Mammary epithelial cell (primary cell): ENCODE measurements at regions of chr1 and their contacts with region 1.

Region 1: GRCh38 chr1:227437495-227438008 is 119.3 kb upstream of the CDC42BPA start:
- DNase-seq: peak; percentile 37
- H3K4me3 ChIP-seq: peak overlapping the region; percentile 25 to 41 (median 36)
- H3K27ac ChIP-seq: no peak overlapping the region
- H3K4me1 ChIP-seq: no peaks in the 10 kb centered on the region
- H3K27me3 ChIP-seq: no peaks in the 10 kb centered on the region
- CTCF ChIP-seq: peak; percentile 39 to 52

Region 2: DNA sequence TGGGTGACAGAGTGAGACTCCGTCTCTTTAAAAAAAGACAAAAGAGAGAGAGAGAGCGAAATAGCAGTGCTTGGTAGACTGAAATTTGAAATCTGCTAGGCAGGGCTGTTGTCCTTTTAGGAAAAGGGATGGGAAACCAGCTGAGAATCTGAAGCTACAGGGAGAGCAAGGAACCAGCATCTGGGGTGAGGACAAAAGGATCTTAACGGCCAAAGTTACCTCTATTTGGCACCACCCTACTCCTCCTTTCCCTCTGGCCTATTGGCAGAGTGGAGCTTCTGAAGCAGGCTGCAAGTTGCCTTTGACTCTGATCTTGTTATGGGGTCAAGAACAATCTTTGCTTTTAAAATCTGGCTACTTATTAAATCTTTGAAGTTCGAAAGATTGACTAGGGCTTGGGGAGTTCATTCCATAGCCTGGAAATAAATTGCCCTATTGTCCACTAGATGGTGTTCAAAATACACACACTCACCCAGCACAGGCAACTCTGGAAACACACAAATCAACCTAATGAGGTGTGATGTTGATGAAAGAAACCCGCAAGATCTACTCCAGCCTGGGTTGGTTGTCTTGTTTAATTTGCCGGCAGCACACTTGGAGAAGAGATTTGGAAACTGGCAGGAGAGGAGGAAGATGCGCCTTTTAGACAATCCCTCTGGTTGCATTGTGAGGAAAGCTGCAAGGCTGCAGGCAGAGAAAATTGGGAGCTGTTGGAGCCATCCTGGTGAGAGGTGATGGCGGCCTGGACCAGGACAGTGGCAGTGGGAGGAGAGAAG is 1013.1 kb before region 1 on chr1:
- CTCF ChIA-PET with region 1: no interaction called
- dilution Hi-C with region 1: no loop called
- in situ Hi-C with region 1: no loop called
- intact Hi-C with region 1: loop called (anchors 5 kb)
- DNase-seq: peak; percentile 39
- H3K4me3 ChIP-seq: no peak overlapping the region
- H3K27ac ChIP-seq: no peak overlapping the region
- H3K4me1 ChIP-seq: no peaks in the 10 kb centered on the region
- H3K27me3 ChIP-seq: no peaks in the 10 kb centered on the region
- CTCF ChIP-seq: peak; percentile 42 to 67

Region 3: GRCh38 chr1:226634166-226634588 is 803.4 kb before region 1 on chr1:
- CTCF ChIA-PET with region 1: no interaction called
- dilution Hi-C with region 1: no loop called
- in situ Hi-C with region 1: no loop called
- intact Hi-C with region 1: loop called (anchors 1 kb)
- DNase-seq: peak; percentile 32
- H3K4me3 ChIP-seq: no peak overlapping the region
- H3K27ac ChIP-seq: no peak overlapping the region
- H3K4me1 ChIP-seq: peaks cover 7% of the 10 kb centered on the region
- H3K27me3 ChIP-seq: no peaks in the 10 kb centered on the region
- CTCF ChIP-seq: peak; percentile 73 to 96

Region 4: DNA sequence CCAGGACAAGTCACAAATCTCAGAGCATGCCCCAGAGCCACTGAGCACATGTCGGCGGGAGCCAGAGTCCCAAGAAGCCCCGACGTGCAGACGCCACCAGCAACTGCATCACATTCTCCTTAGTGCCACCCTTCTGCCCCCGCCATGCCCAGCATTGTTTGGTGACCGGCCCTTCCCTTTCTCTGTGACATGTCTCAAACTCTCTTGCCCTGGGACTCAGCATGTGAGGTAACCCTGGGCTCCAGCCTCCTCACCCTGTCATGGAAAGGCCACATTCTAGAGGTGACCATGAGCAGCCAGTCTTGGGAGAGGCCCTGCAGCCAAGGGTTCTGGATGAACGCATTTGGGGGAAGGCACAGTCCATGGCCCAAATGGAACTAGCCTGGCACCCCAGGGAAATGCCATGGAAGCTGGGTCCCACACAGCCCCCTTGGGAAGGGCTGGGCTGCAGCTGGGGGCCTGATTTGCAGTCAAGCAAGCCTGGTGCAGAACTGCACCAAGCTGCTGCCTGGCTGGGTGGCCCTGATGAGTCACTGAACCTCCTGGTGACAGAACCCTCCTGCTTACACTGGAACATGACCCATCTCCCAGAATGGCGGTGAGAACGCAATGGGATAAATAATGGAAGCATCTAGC is 792.9 kb before region 1 on chr1:
- CTCF ChIA-PET with region 1: no interaction called
- dilution Hi-C with region 1: no loop called
- in situ Hi-C with region 1: no loop called
- intact Hi-C with region 1: no loop called
- DNase-seq: no peak
- H3K4me3 ChIP-seq: no peak overlapping the region
- H3K27ac ChIP-seq: no peak overlapping the region
- H3K4me1 ChIP-seq: peaks cover 17% of the 10 kb centered on the region
- H3K27me3 ChIP-seq: no peaks in the 10 kb centered on the region
- CTCF ChIP-seq: no peak

Region 5: GRCh38 chr1:226827968-226828513 is 609.5 kb before region 1 on chr1:
- CTCF ChIA-PET with region 1: no interaction called
- dilution Hi-C with region 1: no loop called
- in situ Hi-C with region 1: no loop called
- intact Hi-C with region 1: loop called (anchors 1 kb)
- DNase-seq: peak; percentile 73
- H3K4me3 ChIP-seq: no peak overlapping the region
- H3K27ac ChIP-seq: peak overlapping the region; percentile 29
- H3K4me1 ChIP-seq: peaks cover 8% of the 10 kb centered on the region
- H3K27me3 ChIP-seq: no peaks in the 10 kb centered on the region
- CTCF ChIP-seq: peak; percentile 87 to 99

Region 6: GRCh38 chr1:227058321-227058751 is 379.2 kb before region 1 on chr1:
- CTCF ChIA-PET with region 1: no interaction called
- dilution Hi-C with region 1: no loop called
- in situ Hi-C with region 1: no loop called
- intact Hi-C with region 1: loop called (anchors 2 kb)
- DNase-seq: peak; percentile 83
- H3K4me3 ChIP-seq: peak overlapping the region in 1 of 3 experiments; percentile 0
- H3K27ac ChIP-seq: peak overlapping the region; percentile 90
- H3K4me1 ChIP-seq: peaks cover 14% of the 10 kb centered on the region
- H3K27me3 ChIP-seq: no peaks in the 10 kb centered on the region
- CTCF ChIP-seq: no peak

Region 7: DNA sequence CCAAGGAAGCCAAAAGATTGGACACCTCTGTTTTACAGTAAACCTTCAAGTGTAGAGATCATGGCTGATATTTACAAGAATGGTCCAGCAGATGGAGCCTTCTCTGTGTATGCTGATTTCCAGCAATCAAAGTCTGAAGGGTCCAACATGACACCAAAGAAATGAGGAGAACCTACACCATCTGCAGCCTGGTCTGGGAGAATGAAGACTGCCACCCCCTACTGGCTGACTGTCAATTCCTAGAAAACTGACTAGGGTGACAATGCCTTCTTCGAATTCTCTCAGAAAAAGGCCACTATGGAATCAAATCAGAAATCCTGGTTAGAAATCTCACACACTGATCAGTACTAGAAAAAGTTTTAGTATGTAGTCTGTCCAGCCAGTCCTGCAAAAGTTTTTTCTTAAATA is 202.6 kb before region 1 on chr1:
- CTCF ChIA-PET with region 1: no interaction called
- dilution Hi-C with region 1: no loop called
- in situ Hi-C with region 1: loop called in 1 of 2 experiments (anchors 25 kb)
- intact Hi-C with region 1: loop called (anchors 1 kb)
- DNase-seq: peak; percentile 51
- H3K4me3 ChIP-seq: no peak overlapping the region
- H3K27ac ChIP-seq: no peak overlapping the region
- H3K4me1 ChIP-seq: no peaks in the 10 kb centered on the region
- H3K27me3 ChIP-seq: no peaks in the 10 kb centered on the region
- CTCF ChIP-seq: peak; percentile 32 to 63

Region 8: GRCh38 chr1:227372726-227373130 is 64.8 kb before region 1 on chr1:
- CTCF ChIA-PET with region 1: no interaction called
- dilution Hi-C with region 1: no loop called
- in situ Hi-C with region 1: no loop called
- intact Hi-C with region 1: no loop called
- DNase-seq: peak; percentile 19
- H3K4me3 ChIP-seq: no peak overlapping the region
- H3K27ac ChIP-seq: no peak overlapping the region
- H3K4me1 ChIP-seq: no peaks in the 10 kb centered on the region
- H3K27me3 ChIP-seq: no peaks in the 10 kb centered on the region
- CTCF ChIP-seq: no peak